Activated naive CD4-positive, alpha-beta T cell treated with anti-CD3 and anti-CD28 coated beads for 36 hours (primary cell): ENCODE measurements at regions of chr4 and their contacts with region 1.

Region 1: DNA sequence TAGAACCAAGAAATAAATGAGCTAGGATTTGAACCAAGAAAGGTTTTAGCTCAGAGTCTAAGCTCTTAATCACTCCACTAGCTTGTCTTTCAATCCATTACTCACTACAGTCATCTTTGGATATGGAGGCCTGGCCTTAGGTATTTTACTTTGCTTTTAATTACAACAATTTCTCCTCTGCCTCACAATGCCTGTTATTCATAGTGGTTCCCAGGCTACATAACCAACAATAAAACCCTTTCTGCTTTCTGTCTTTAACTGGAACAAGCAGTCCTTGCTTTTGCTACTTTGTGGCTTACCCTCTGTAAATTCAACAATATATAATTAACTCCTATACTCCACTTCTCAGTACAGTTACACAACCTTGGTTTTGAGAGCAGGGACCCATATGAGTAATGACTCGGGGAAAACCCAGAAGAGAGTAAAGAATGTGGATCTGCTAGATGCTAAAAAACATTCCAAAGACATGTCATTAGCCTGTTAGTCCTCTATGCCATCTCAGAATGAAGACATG is 94.7 kb upstream of the NAP1L5 start:
- DNase-seq: peak; percentile 23
- H3K4me3 Mint-ChIP-seq: no peak overlapping the region
- H3K27ac Mint-ChIP-seq: peak overlapping the region; percentile 25
- H3K4me1 Mint-ChIP-seq: peaks cover 19% of the 10 kb centered on the region
- H3K27me3 Mint-ChIP-seq: no peaks in the 10 kb centered on the region

Region 2: DNA sequence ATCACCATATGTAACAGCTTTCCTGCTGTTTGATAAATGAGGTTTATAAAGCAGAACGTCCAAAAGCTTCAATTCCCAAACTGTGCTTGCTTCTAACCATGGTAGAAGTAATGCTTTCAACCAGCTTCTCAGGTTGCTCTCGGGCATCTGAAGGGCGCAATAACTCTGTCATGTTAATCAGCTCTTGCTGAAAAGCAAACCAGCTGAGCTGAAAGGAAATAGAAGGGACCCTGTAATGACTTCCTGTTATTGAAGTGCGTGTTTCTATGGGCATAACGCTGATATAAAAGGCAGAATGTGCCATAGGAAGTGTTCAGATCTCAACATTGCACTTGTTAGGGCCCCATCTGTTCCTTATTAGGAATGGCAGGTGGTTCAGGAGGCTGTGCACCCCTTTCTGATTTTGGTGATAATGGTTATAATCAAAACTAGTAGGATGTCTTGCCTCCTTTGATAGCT is 178.9 kb before region 1 on chr4:
- CTCF ChIA-PET with region 1: no interaction called
- intact Hi-C with region 1: loop called (anchors 2 kb)
- DNase-seq: peak; percentile 62
- H3K4me3 Mint-ChIP-seq: peak overlapping the region; percentile 64
- H3K27ac Mint-ChIP-seq: peak overlapping the region; percentile 92
- H3K4me1 Mint-ChIP-seq: peaks cover 82% of the 10 kb centered on the region
- H3K27me3 Mint-ChIP-seq: no peaks in the 10 kb centered on the region

Region 3: DNA sequence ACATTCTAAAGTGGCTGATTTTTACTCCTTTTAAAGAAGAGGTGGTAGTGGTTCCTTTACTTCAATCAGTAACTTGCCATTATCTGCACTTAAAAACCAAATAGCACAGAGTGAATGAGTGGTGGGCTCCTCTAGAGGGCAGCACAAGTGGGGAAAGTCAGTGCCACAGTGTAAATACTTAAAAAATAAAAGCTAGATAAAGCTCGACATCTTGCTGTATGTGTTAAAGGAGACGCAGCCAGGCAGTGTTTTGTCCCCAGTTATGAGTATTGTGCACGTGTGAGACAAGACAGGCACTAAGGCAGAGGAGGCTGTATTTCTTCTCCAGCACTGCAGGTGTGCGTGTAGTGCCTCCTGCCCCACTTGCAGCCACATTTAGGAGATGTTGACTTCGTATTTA is 119.3 kb before region 1 on chr4:
- CTCF ChIA-PET with region 1: interaction called, 3 read pairs
- intact Hi-C with region 1: loop called (anchors 1 kb)
- DNase-seq: peak; percentile 62
- H3K4me3 Mint-ChIP-seq: no peak overlapping the region
- H3K27ac Mint-ChIP-seq: no peak overlapping the region
- H3K4me1 Mint-ChIP-seq: peaks cover 6% of the 10 kb centered on the region
- H3K27me3 Mint-ChIP-seq: no peaks in the 10 kb centered on the region

Region 4: DNA sequence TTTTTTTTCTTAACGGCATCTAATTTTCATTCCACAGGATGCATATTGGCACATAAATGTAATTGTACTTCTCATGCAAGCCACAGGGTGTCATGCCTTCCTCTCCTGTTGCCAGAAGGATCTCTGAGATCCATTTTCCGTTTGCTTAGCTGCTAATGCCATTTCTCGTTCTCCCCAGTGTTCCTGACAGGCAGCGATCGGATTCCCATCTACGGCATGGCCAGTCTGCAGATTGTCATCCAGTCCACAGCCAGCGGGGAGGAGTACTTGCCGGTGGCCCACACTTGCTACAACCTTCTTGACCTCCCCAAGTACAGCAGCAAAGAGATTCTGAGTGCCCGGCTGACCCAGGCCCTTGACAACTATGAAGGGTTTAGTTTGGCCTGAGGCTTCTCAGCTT is 85.8 kb before region 1 on chr4:
- CTCF ChIA-PET with region 1: interaction called, 3 read pairs
- intact Hi-C with region 1: loop called (anchors 2 kb)
- DNase-seq: no peak
- H3K4me3 Mint-ChIP-seq: no peak overlapping the region
- H3K27ac Mint-ChIP-seq: no peak overlapping the region
- H3K4me1 Mint-ChIP-seq: peaks cover 18% of the 10 kb centered on the region
- H3K27me3 Mint-ChIP-seq: no peaks in the 10 kb centered on the region

Region 5: GRCh38 chr4:88737307-88737941 is 54.9 kb before region 1 on chr4:
- CTCF ChIA-PET with region 1: interaction called, 3 read pairs
- intact Hi-C with region 1: loop called (anchors 2 kb)
- DNase-seq: peak; percentile 70
- H3K4me3 Mint-ChIP-seq: peak overlapping the region; percentile 58
- H3K27ac Mint-ChIP-seq: peak overlapping the region; percentile 9
- H3K4me1 Mint-ChIP-seq: peaks cover 20% of the 10 kb centered on the region
- H3K27me3 Mint-ChIP-seq: no peaks in the 10 kb centered on the region

Region 6: GRCh38 chr4:88803600-88804096 is 11.3 kb after region 1 on chr4:
- CTCF ChIA-PET with region 1: interaction called, 13 read pairs
- intact Hi-C with region 1: loop called (anchors 1 kb)
- DNase-seq: peak; percentile 60
- H3K4me3 Mint-ChIP-seq: no peak overlapping the region
- H3K27ac Mint-ChIP-seq: no peak overlapping the region
- H3K4me1 Mint-ChIP-seq: peaks cover 22% of the 10 kb centered on the region
- H3K27me3 Mint-ChIP-seq: no peaks in the 10 kb centered on the region